ENCODE measurements at regions of chr7 and their contacts with region 1.

Region 1: GRCh38 chr7:32062150-32062549 is 8.1 kb downstream of the PDE1C start:
- DNase-seq: peak; percentile 16
- ATAC-seq: peak; percentile 78
- H3K4me3 ChIP-seq: no peak overlapping the region
- H3K27ac ChIP-seq: no peak overlapping the region
- H3K4me1 ChIP-seq: no peaks in the 10 kb centered on the region
- H3K27me3 ChIP-seq: no peaks in the 10 kb centered on the region; a peak in 1 of 5 replicates
- CTCF ChIP-seq: peak; percentile 59
- EP300 ChIP-seq: no peak
- POLR2A ChIP-seq: no peak
- RAD21 ChIP-seq: no peak

Region 2: DNA sequence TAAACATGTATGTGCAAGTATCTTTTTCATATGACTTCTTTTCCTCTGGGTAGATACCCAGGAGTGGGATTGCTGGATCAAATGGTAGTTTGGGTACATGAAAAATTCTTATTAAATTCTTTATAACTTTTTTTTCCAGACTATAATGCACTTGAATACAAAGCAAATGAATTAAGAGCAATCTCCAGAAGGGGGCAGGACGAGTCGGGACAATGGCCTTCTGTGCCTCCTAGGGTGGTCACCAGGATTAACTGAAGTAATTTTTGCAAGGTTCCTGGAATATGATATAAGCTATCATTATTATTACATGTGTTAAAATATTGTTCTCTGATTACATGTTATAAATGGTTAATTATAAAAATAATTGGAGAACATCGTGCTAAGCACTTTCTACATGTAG is 248.0 kb before region 1 on chr7:
- CTCF ChIA-PET with region 1: interaction called, 6 read pairs
- POLR2A ChIA-PET with region 1: no interaction called
- in situ Hi-C with region 1: no loop called
- intact Hi-C with region 1: loop called (anchors 1 kb)
- DNase-seq: peak; percentile 13
- ATAC-seq: peak; percentile 49; the same call in 1 of the 3 replicates
- H3K4me3 ChIP-seq: no peak overlapping the region
- H3K27ac ChIP-seq: no peak overlapping the region
- H3K4me1 ChIP-seq: no peaks in the 10 kb centered on the region
- H3K27me3 ChIP-seq: no peaks in the 10 kb centered on the region
- CTCF ChIP-seq: peak; percentile 41
- EP300 ChIP-seq: no peak
- POLR2A ChIP-seq: no peak
- RAD21 ChIP-seq: no peak

Region 3: GRCh38 chr7:32119790-32120196 is 57.6 kb after region 1 on chr7:
- CTCF ChIA-PET with region 1: no interaction called
- POLR2A ChIA-PET with region 1: no interaction called
- in situ Hi-C with region 1: no loop called
- intact Hi-C with region 1: no loop called
- DNase-seq: no peak
- ATAC-seq: no peak
- H3K4me3 ChIP-seq: no peak overlapping the region
- H3K27ac ChIP-seq: no peak overlapping the region
- H3K4me1 ChIP-seq: no peaks in the 10 kb centered on the region
- H3K27me3 ChIP-seq: no peaks in the 10 kb centered on the region
- CTCF ChIP-seq: no peak
- EP300 ChIP-seq: no peak
- POLR2A ChIP-seq: no peak
- RAD21 ChIP-seq: no peak

Region 4: GRCh38 chr7:32259931-32260596 is 197.9 kb after region 1 on chr7:
- CTCF ChIA-PET with region 1: no interaction called
- POLR2A ChIA-PET with region 1: no interaction called
- in situ Hi-C with region 1: no loop called
- intact Hi-C with region 1: no loop called
- DNase-seq: no peak
- ATAC-seq: no peak
- H3K4me3 ChIP-seq: no peak overlapping the region
- H3K27ac ChIP-seq: no peak overlapping the region
- H3K4me1 ChIP-seq: no peaks in the 10 kb centered on the region
- H3K27me3 ChIP-seq: no peaks in the 10 kb centered on the region; a peak in 1 of 5 replicates
- CTCF ChIP-seq: no peak
- EP300 ChIP-seq: no peak
- POLR2A ChIP-seq: no peak
- RAD21 ChIP-seq: no peak

Measured in HepG2 (cell line).